ENCODE measurements at regions of chr13 and their contacts with region 1.

Region 1: GRCh38 chr13:33228648-33229445 is 56.7 kb downstream of the STARD13 start:
- DNase-seq: peak; percentile 73
- H3K4me3 ChIP-seq: no peak overlapping the region
- H3K27ac ChIP-seq: peak overlapping the region; percentile 88
- H3K4me1 ChIP-seq: peaks cover 52% of the 10 kb centered on the region
- H3K27me3 ChIP-seq: no peaks in the 10 kb centered on the region
- CTCF ChIP-seq: peak; percentile 94

Region 2: GRCh38 chr13:33119871-33120456 is 108.9 kb before region 1 on chr13:
- CTCF ChIA-PET with region 1: no interaction called
- POLR2A ChIA-PET with region 1: no interaction called
- intact Hi-C with region 1: no loop called
- DNase-seq: no peak
- H3K4me3 ChIP-seq: no peak overlapping the region
- H3K27ac ChIP-seq: no peak overlapping the region
- H3K4me1 ChIP-seq: peaks cover 44% of the 10 kb centered on the region
- H3K27me3 ChIP-seq: no peaks in the 10 kb centered on the region
- CTCF ChIP-seq: no peak

Region 3: GRCh38 chr13:33438918-33439317 is 210.1 kb after region 1 on chr13:
- CTCF ChIA-PET with region 1: no interaction called
- POLR2A ChIA-PET with region 1: no interaction called
- intact Hi-C with region 1: loop called (anchors 5 kb)
- DNase-seq: no peak
- H3K4me3 ChIP-seq: no peak overlapping the region
- H3K27ac ChIP-seq: peak overlapping the region; percentile 96
- H3K4me1 ChIP-seq: peaks cover 47% of the 10 kb centered on the region
- H3K27me3 ChIP-seq: no peaks in the 10 kb centered on the region
- CTCF ChIP-seq: no peak

Region 4: GRCh38 chr13:33487575-33488243 is 258.9 kb after region 1 on chr13:
- CTCF ChIA-PET with region 1: interaction called, 3 read pairs
- POLR2A ChIA-PET with region 1: no interaction called
- intact Hi-C with region 1: loop called (anchors 2 kb)
- DNase-seq: peak; percentile 71
- H3K4me3 ChIP-seq: no peak overlapping the region
- H3K27ac ChIP-seq: no peak overlapping the region
- H3K4me1 ChIP-seq: peaks cover 33% of the 10 kb centered on the region
- H3K27me3 ChIP-seq: no peaks in the 10 kb centered on the region
- CTCF ChIP-seq: peak; percentile 62

Region 5: DNA sequence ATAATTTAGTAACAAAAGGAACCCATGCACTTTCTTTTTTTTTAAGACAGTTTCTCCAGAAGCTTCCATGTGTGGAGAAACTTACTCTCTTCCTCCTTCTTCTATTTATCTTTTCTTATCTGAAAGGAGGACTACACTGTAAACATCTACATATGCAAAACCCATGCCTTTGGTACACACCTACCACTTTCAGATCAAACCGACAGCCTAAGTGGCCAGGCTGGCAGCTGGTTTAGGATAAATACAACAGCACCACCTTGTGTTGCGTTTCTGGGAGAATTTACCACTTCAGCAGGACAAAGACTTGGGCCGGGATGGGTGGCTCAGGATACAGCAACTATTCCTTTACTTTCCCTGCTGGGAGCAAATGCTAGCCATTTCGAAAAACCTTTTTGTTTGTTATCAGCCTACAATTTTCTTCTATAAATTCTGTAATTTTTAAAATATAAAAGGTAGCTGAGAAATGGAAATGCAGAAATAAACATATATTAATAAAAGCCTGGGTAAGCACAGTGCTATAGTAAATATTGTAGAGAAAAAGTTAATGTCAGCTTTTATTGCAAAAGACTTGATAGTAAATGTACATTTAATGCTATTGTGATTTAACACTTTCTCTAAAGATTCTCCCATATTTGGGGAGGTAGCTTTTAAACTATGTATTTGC is 495.1 kb after region 1 on chr13:
- CTCF ChIA-PET with region 1: no interaction called
- POLR2A ChIA-PET with region 1: no interaction called
- intact Hi-C with region 1: loop called (anchors 5 kb)
- DNase-seq: peak; percentile 90
- H3K4me3 ChIP-seq: no peak overlapping the region
- H3K27ac ChIP-seq: no peak overlapping the region
- H3K4me1 ChIP-seq: peaks cover 26% of the 10 kb centered on the region
- H3K27me3 ChIP-seq: no peaks in the 10 kb centered on the region
- CTCF ChIP-seq: peak; percentile 89